Left colon (tissue), 2 donors: ENCODE measurements at regions of chr3 and their contacts with region 1.

Region 1: DNA sequence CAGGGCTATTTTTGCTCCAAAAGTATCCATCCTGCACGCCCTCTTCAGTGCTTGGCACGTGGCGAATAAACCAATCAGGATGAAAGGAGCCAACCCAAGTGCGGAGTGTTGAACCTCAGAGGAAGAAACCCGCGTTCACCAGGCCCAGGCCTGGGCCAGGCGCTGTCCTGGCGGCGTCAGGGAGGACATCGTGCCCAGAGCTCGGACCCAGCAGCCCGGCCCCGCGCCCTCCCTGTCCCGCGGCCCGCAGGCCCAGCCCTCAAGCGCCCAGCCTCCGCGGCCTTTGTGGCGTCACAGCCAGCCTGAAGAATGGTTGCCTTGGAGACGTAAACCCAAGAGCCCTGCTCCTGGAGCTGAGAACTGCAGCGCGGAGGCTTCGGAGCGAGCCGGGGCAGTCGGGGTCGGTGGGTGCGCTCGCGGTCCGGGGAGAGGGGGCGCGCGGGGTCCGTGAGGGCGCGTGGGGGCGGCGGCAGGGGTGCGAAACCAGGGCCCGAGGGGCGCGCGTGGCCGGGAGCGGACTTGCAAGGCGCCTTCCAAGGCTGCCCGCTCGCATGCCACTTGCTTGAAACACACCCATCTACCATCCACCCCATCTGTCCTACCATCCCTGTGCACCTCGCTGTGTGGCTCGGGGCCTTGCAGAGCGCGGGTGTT is at the start of gene CFAP100:
- DNase-seq: peak in 1 of 2 donors; percentile 25
- ATAC-seq: peak; percentile 44
- total RNA-seq, gene CFAP100: not detected

Region 2: GRCh38 chr3:126129181-126129891 is 265.4 kb before region 1 on chr3:
- intact Hi-C with region 1: loop called in 1 of 2 experiments (anchors 5 kb)
- DNase-seq: peak; percentile 15 to 22
- ATAC-seq: no peak

Region 3: GRCh38 chr3:126259411-126260391 is 135.0 kb before region 1 on chr3:
- intact Hi-C with region 1: loop called (anchors 5 kb)
- DNase-seq: peak in 1 of 2 donors; percentile 43
- ATAC-seq: peak; percentile 40

Region 4: DNA sequence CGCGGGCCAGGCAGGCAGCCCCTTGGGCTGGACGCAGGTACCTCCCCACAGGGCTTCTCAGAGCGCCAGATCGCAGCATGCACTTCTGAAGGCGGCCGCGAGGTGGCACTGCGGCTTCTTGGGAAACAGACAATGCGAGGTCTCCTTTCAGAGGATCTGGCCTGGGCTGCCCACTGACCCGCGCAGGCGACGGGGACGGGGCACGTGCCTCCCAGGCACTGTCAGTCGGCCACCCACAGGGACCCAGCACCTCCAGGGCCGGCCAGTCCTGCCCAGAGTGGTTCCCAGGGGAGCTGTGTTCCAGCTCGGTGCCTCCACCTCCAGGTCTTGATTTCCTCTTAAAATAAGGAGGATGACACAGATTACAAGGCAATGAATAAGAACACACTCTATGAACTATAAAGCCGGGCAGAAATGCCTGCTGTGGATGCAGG is 284.6 kb after region 1 on chr3:
- intact Hi-C with region 1: no loop called
- DNase-seq: peak; percentile 60 to 83
- ATAC-seq: peak; percentile 92